Aorta (tissue), 5 donors: ENCODE measurements at regions of chr15 and their contacts with region 1.

Region 1: GRCh38 chr15:63752075-63752684 is 81.6 kb downstream of the HERC1 start:
- DNase-seq: no peak
- ATAC-seq: no peak
- H3K4me3 ChIP-seq: no peak overlapping the region
- H3K27ac ChIP-seq: no peak overlapping the region
- H3K4me1 ChIP-seq: no peaks in the 10 kb centered on the region
- H3K27me3 ChIP-seq: no peaks in the 10 kb centered on the region

Region 2: GRCh38 chr15:63805993-63806980 is 54.1 kb after region 1 on chr15:
- intact Hi-C with region 1: no loop called
- DNase-seq: no peak
- ATAC-seq: no peak
- H3K4me3 ChIP-seq: no peak overlapping the region
- H3K27ac ChIP-seq: no peak overlapping the region
- H3K4me1 ChIP-seq: peaks cover 0 to 2% of the 10 kb centered on the region in 2 donors
- H3K27me3 ChIP-seq: no peaks in the 10 kb centered on the region

Region 3: DNA sequence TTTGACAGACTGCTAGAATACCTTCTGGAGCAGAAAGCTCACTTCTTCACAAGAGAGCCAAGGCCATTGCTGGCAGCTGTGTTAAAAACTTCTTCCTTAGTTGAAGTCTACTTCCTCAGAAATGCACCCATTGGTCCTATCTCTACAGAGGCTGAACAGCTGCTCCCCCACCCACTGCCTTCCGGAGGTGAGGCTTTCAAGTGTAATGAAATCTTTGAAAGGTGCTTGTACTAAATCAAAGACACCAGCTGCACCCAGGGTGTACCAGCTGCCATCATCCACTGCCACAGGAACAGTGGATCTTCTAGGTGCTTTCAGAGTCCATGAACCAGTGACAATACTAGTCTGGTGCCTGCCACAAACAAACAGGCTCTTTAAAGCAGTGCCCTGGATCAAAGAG is 108.0 kb after region 1 on chr15:
- intact Hi-C with region 1: no loop called
- DNase-seq: no peak
- ATAC-seq: no peak
- H3K4me3 ChIP-seq: no peak overlapping the region
- H3K27ac ChIP-seq: no peak overlapping the region
- H3K4me1 ChIP-seq: no peaks in the 10 kb centered on the region
- H3K27me3 ChIP-seq: no peaks in the 10 kb centered on the region

Region 4: GRCh38 chr15:63881431-63881830 is 129.3 kb after region 1 on chr15:
- intact Hi-C with region 1: loop called in 1 of 2 experiments (anchors 10 kb)
- DNase-seq: no peak
- ATAC-seq: no peak
- H3K4me3 ChIP-seq: no peak overlapping the region
- H3K27ac ChIP-seq: no peak overlapping the region
- H3K4me1 ChIP-seq: no peaks in the 10 kb centered on the region
- H3K27me3 ChIP-seq: no peaks in the 10 kb centered on the region

Region 5: GRCh38 chr15:63891079-63891767 is 139.0 kb after region 1 on chr15:
- intact Hi-C with region 1: loop called (anchors 2 to 10 kb)
- DNase-seq: peak; percentile 82 to 90
- ATAC-seq: peak; percentile 80
- H3K4me3 ChIP-seq: no peak overlapping the region
- H3K27ac ChIP-seq: no peak overlapping the region
- H3K4me1 ChIP-seq: no peaks in the 10 kb centered on the region
- H3K27me3 ChIP-seq: no peaks in the 10 kb centered on the region

Region 6: DNA sequence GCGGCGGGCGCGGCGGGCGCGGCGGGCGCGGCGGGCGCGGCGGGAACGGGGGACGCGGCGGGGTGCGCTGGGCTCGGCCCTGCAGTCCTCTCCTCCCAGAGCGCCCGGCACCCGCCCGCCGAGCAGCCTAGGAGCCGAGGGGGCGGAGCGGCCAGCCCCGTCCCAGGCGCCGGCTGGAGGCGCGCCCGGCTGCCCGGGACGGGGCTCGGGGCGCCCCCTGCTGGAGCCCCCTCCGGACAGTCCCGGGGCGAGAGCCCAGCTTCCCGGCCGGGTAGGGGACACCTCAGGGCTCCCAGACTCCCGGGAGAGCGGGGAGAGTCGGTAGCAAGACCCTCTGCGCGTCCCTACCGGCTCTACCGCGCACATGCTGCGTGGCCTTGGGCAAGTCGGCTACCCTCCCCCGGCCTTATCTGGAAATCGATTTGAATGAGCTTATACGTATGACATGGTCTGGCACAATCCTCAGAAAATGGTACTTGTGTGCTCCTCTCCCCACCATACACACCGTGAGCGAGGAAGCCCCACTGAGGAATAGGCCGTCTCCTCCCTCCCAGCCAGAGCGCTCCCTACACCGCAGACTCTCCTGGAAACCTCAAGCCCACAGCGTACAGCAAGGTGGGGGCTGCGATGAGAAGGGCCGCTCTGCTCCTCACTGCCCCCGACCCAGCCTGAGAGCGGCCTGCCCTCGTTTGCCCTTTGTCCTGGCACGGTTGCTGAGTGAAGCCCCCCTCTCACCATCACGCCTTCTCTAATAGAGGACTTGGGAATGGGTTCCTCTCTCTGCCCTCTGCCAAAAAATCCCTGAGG is 294.4 kb after region 1 on chr15 and contains the start of gene DAPK2:
- intact Hi-C with region 1: loop called in 1 of 2 experiments (anchors 5 kb)
- DNase-seq: peak; percentile 77 to 89
- ATAC-seq: peak; percentile 88
- H3K4me3 ChIP-seq: peak within 1 kb of the TSS; percentile 37 to 85
- H3K27ac ChIP-seq: no peak within 1 kb of the TSS
- H3K4me1 ChIP-seq: no peaks in the 10 kb centered on the region
- H3K27me3 ChIP-seq: no peaks in the 10 kb centered on the region
- total RNA-seq, gene DAPK2: 6.0 to 8.0 TPM

Region 7: GRCh38 chr15:64067564-64068030 is 315.4 kb after region 1 on chr15:
- intact Hi-C with region 1: loop called (anchors 2 kb)
- DNase-seq: peak in 1 of 2 donors; percentile 59
- ATAC-seq: peak; percentile 80
- H3K4me3 ChIP-seq: no peak overlapping the region
- H3K27ac ChIP-seq: no peak overlapping the region
- H3K4me1 ChIP-seq: no peaks in the 10 kb centered on the region
- H3K27me3 ChIP-seq: no peaks in the 10 kb centered on the region